ENCODE measurements at regions of chr2 and their contacts with region 1.

Region 1: GRCh38 chr2:677056-677965 is at the start of gene TMEM18:
- DNase-seq: peak; percentile 84 to 98
- H3K4me3 ChIP-seq: peak within 1 kb of the TSS; percentile 60 to 88
- H3K27ac ChIP-seq: peak within 1 kb of the TSS; percentile 94
- H3K4me1 ChIP-seq: no peaks in the 10 kb centered on the region
- H3K27me3 ChIP-seq: no peaks in the 10 kb centered on the region
- CTCF ChIP-seq: peak in 2 of 3 experiments; percentile 7 to 34
- total RNA-seq, gene TMEM18: 6.4 TPM

Region 2: GRCh38 chr2:264660-265468 is 412.4 kb before region 1 on chr2 and contains the start of gene ACP1:
- intact Hi-C with region 1: loop called (anchors 5 kb)
- DNase-seq: peak; percentile 74 to 95
- H3K4me3 ChIP-seq: peak within 1 kb of the TSS; percentile 73 to 86
- H3K27ac ChIP-seq: peak within 1 kb of the TSS; percentile 56 to 71
- H3K4me1 ChIP-seq: peaks cover 5 to 11% of the 10 kb centered on the region in 2 donors
- H3K27me3 ChIP-seq: no peaks in the 10 kb centered on the region
- CTCF ChIP-seq: no peak
- total RNA-seq, gene ACP1: 30.8 TPM

Region 3: GRCh38 chr2:368386-368785 is 308.9 kb before region 1 on chr2:
- intact Hi-C with region 1: no loop called
- DNase-seq: no peak
- H3K4me3 ChIP-seq: no peak overlapping the region
- H3K27ac ChIP-seq: no peak overlapping the region
- H3K4me1 ChIP-seq: peaks cover 0 to 7% of the 10 kb centered on the region in 2 donors
- H3K27me3 ChIP-seq: no peaks in the 10 kb centered on the region
- CTCF ChIP-seq: no peak

Region 4: GRCh38 chr2:689877-690510 is 12.7 kb after region 1 on chr2:
- intact Hi-C with region 1: loop called (anchors 1 kb)
- DNase-seq: no peak
- H3K4me3 ChIP-seq: no peak overlapping the region
- H3K27ac ChIP-seq: peak overlapping the region; percentile 59 to 71
- H3K4me1 ChIP-seq: peaks cover 5 to 14% of the 10 kb centered on the region in 2 donors
- H3K27me3 ChIP-seq: no peaks in the 10 kb centered on the region
- CTCF ChIP-seq: no peak

Region 5: DNA sequence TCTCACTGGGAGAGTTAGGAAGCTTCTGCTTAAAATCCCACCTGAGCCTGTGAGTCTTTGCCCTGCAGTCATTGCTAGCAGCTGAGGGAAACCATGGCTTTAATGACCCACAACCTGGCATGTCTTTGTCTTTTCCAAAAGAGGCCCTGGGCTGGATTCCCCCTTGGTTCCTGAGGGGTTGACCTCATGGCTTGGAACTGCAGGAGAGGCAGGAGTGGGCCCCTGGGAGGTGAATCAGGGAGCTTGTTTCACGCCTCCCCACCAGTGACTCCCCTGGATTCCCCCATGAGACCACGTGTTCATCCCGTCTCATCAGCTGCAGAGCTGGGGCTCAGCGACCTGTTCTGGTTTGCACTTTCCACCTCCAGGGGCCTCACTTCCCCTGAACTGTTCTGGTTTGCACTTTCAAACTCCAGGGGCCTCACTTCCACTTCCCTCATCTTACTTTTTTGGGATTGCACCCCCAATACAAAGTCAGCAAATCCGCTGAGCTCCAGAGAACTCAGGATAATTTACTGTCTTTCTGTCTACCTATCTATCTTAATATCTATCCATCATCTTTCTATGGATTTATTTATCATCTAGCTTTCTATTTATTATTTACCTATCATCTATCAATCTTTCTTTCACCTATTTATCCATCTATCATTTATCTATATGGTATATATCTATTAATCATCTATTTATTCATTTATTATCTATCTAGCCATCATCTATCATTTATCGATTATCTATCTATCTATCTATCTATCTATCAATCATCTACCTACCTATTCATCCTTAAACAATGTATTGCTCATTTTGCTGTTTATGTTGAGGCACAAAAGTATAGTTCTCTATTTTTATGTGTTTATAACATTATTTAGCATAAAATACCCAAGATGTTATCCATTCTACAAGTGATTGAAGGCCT is 58.6 kb after region 1 on chr2:
- intact Hi-C with region 1: loop called (anchors 1 kb)
- DNase-seq: no peak
- H3K4me3 ChIP-seq: no peak overlapping the region
- H3K27ac ChIP-seq: no peak overlapping the region
- H3K4me1 ChIP-seq: peaks cover 3 to 4% of the 10 kb centered on the region in 2 donors
- H3K27me3 ChIP-seq: no peaks in the 10 kb centered on the region
- CTCF ChIP-seq: no peak